GM13976 (cell line): ENCODE measurements at regions of chr1 and their contacts with region 1.

Region 1: GRCh38 chr1:58515794-58516401 is 30.6 kb downstream of the OMA1 start:
- DNase-seq: peak; percentile 42
- CTCF ChIP-seq: peak; percentile 48

Region 2: GRCh38 chr1:58331156-58331555 is 184.7 kb before region 1 on chr1:
- in situ Hi-C with region 1: no loop called
- DNase-seq: no peak
- CTCF ChIP-seq: no peak

Region 3: GRCh38 chr1:58460469-58460868 is 55.4 kb before region 1 on chr1:
- in situ Hi-C with region 1: no loop called
- DNase-seq: no peak
- CTCF ChIP-seq: no peak

Region 4: GRCh38 chr1:58597076-58597475 is 81.2 kb after region 1 on chr1:
- in situ Hi-C with region 1: no loop called
- DNase-seq: no peak
- CTCF ChIP-seq: no peak

Region 5: GRCh38 chr1:58816072-58816746 is 300.3 kb after region 1 on chr1:
- in situ Hi-C with region 1: no loop called
- DNase-seq: peak; percentile 92
- CTCF ChIP-seq: peak; percentile 28

Region 6: GRCh38 chr1:59759156-59759925 is 1243.4 kb after region 1 on chr1:
- in situ Hi-C with region 1: loop called (anchors 25 kb)
- DNase-seq: peak; percentile 78
- CTCF ChIP-seq: peak; percentile 86